ENCODE measurements at regions of chr12 and their contacts with region 1.

Region 1: GRCh38 chr12:71636704-71637115 is 26.9 kb downstream of the ZFC3H1 start:
- DNase-seq: no peak
- H3K4me3 Mint-ChIP-seq: no peak overlapping the region
- H3K27ac Mint-ChIP-seq: peak overlapping the region; percentile 17
- H3K4me1 Mint-ChIP-seq: peaks cover 6% of the 10 kb centered on the region
- H3K27me3 Mint-ChIP-seq: no peaks in the 10 kb centered on the region

Region 2: DNA sequence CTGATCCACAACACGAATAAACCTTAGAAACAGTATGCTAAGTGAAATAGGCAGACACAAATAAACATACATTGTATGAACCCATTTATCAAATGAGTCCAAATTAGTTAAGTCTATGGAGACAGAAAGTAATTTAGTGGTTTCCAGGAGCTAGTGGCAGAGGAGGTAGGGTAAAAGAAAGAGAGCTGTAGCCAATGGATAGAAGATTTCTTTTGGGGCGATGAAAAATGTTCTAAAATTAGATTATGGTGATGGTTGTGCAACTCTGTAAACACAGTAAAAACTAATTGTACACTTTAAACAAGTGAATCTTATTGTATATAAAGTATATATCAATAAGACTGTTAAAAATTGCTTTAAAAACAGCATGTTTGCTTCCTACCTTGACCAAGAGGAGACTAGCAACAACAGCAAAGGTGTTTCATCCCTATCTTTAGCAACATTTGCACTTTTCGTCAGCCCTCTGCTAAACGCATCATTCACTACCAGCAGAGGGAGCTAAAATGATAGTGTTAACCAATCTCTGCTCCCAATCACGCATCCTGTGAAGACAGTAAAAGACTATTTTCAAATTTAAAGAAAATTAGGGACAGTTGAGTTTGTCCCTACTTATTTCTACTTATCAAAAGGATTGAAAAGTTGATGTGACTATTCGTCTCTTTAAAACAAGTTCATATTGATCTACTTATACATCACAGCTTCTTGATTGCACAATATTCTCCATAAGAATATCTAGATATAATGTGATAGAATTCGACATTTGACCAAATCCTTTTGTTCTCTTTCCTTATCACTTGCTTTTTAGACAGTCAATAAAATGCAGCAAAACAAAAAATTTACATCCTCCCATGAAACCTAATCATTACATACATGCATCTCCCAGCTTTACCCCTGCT is 221.1 kb before region 1 on chr12:
- CTCF ChIA-PET with region 1: interaction called, 14 read pairs
- DNase-seq: peak; percentile 48
- H3K4me3 Mint-ChIP-seq: no peak overlapping the region
- H3K27ac Mint-ChIP-seq: no peak overlapping the region
- H3K4me1 Mint-ChIP-seq: no peaks in the 10 kb centered on the region
- H3K27me3 Mint-ChIP-seq: peaks cover 5% of the 10 kb centered on the region

Region 3: GRCh38 chr12:71626098-71626497 is 10.6 kb before region 1 on chr12:
- CTCF ChIA-PET with region 1: interaction called, 16 read pairs
- DNase-seq: no peak
- H3K4me3 Mint-ChIP-seq: no peak overlapping the region
- H3K27ac Mint-ChIP-seq: peak overlapping the region; percentile 40
- H3K4me1 Mint-ChIP-seq: peaks cover 13% of the 10 kb centered on the region
- H3K27me3 Mint-ChIP-seq: no peaks in the 10 kb centered on the region

Region 4: GRCh38 chr12:71719615-71720370 is 83.1 kb after region 1 on chr12:
- CTCF ChIA-PET with region 1: no interaction called
- DNase-seq: no peak
- H3K4me3 Mint-ChIP-seq: no peak overlapping the region
- H3K27ac Mint-ChIP-seq: no peak overlapping the region
- H3K4me1 Mint-ChIP-seq: no peaks in the 10 kb centered on the region
- H3K27me3 Mint-ChIP-seq: peaks cover 2% of the 10 kb centered on the region

Measured in activated naive CD4-positive, alpha-beta T cell treated with anti-CD3 and anti-CD28 coated beads, Interleukin-2, amount 10 ng/mL, durations not matched to agents 7 days and 5 days (primary cell).